HCT116 (cell line): ENCODE measurements at regions of chr9 and their contacts with region 1.

Region 1: GRCh38 chr9:15422372-15423230 is at the start of gene SNAPC3:
- DNase-seq: peak; percentile 83
- ATAC-seq: peak; percentile 98
- H3K4me3 ChIP-seq: peak within 1 kb of the TSS; percentile 91 to 94
- H3K27ac ChIP-seq: peak within 1 kb of the TSS; percentile 75
- H3K4me1 ChIP-seq: peaks cover 3 to 14% of the 10 kb centered on the region in 2 experiments; a peak in 3 of 4 replicates
- H3K27me3 ChIP-seq: no peaks in the 10 kb centered on the region
- CTCF ChIP-seq: no peak
- POLR2A ChIP-seq: peak; percentile 80
- RAD21 ChIP-seq: no peak
- total RNA-seq, gene SNAPC3: 26.1 TPM

Region 2: DNA sequence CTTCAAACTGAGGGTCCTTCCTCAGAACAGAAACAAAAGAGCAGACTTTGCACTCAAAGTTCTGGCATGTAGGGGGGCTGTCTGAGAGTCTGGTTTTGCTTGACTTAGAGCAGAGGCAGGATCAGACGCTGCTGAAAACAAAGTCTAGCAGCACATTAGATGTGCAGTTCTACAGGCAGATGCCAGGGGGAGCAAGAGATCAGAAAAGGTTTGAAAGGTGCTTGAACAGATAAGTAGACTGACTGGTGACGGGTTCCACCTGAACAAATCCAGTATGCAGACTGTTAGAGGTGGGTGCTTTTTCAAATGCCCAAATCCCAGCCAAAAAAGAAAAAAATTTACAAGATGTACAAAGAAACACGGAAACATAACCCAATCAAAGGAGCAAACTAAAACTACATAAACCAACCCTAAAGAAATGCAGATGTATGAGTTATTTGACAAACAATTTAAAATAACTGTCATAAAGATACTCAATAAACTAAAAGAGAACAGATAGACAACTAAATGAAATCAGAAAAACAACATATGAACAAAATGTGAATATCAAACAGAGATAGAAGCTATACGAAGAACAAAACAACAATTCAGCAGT is 317.7 kb before region 1 on chr9:
- CTCF ChIA-PET with region 1: no interaction called
- POLR2A ChIA-PET with region 1: no interaction called
- RAD21 ChIA-PET with region 1: no interaction called
- intact Hi-C with region 1: loop called (anchors 2 kb)
- DNase-seq: peak; percentile 16
- ATAC-seq: peak; percentile 92
- H3K4me3 ChIP-seq: no peak overlapping the region
- H3K27ac ChIP-seq: no peak overlapping the region
- H3K4me1 ChIP-seq: no peaks in the 10 kb centered on the region
- H3K27me3 ChIP-seq: peaks cover 9% of the 10 kb centered on the region; the same call in 1 of the 2 replicates
- CTCF ChIP-seq: peak; percentile 54 to 74 (median 74); a peak in 5 of 6 replicates
- POLR2A ChIP-seq: no peak
- RAD21 ChIP-seq: peak; percentile 52

Region 3: GRCh38 chr9:15277400-15278090 is 145.1 kb before region 1 on chr9:
- CTCF ChIA-PET with region 1: no interaction called
- POLR2A ChIA-PET with region 1: no interaction called
- RAD21 ChIA-PET with region 1: no interaction called
- intact Hi-C with region 1: loop called (anchors 5 kb)
- DNase-seq: peak; percentile 4
- ATAC-seq: no peak
- H3K4me3 ChIP-seq: no peak overlapping the region
- H3K27ac ChIP-seq: no peak overlapping the region
- H3K4me1 ChIP-seq: peaks cover 4 to 8% of the 10 kb centered on the region in 2 experiments; a peak in 2 of 4 replicates
- H3K27me3 ChIP-seq: no peaks in the 10 kb centered on the region
- CTCF ChIP-seq: peak in 2 of 3 experiments; percentile 40 to 52; a peak in 3 of 6 replicates
- POLR2A ChIP-seq: no peak
- RAD21 ChIP-seq: peak; percentile 63

Region 4: GRCh38 chr9:15501179-15501578 is 78.6 kb after region 1 on chr9:
- CTCF ChIA-PET with region 1: no interaction called
- POLR2A ChIA-PET with region 1: no interaction called
- RAD21 ChIA-PET with region 1: no interaction called
- intact Hi-C with region 1: no loop called
- DNase-seq: no peak
- ATAC-seq: no peak
- H3K4me3 ChIP-seq: no peak overlapping the region
- H3K27ac ChIP-seq: no peak overlapping the region
- H3K4me1 ChIP-seq: no peaks in the 10 kb centered on the region
- H3K27me3 ChIP-seq: no peaks in the 10 kb centered on the region
- CTCF ChIP-seq: no peak
- POLR2A ChIP-seq: no peak
- RAD21 ChIP-seq: no peak